SK-N-SH (cell line): ENCODE measurements at regions of chr5 and their contacts with region 1.

Region 1: DNA sequence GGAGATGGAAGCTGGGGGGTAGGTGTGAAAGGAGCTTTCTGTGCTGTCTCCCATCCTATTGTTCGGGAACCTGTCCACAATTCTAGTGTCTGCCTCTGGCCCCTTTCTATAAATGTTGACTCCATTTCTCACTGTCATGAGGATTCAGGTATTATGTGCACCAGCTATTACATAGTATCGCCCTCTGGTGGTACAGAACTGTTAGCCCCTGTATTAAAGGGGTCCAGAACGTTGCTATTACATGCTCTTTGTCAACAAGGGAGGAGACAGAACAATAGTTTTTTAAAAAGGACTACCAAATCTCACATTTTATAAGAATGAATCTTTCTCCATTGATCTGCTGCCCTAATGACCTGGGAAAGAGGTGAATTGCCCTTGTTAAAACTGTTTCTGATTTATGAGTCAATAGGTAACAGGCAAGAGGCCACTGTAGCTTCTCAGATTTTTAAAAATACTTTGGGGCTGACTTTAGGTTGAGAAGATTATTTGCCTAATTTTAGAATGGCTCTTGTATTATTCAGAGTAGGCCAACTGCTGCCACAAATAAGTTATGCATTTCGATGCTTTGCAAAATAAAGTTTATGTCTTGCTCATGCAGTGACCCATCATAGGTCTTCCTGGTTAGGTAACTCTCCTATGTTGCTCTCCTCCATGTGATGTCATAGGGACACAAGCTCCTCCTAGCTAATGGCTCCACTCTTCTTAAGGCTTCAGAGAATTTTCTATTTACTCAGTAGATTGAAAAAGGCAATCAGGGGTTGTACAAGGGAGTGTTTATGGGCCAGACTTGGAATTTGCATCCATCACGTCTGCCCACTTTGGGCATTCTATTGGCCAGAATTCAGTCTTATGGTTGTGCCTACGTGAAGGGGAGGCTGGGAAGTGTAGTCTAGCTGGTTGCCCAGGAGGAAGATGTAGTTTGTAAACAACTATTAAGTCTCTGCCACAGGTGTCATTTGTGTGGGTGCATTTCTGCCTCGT is 20.8 kb downstream of the DCANP1 start:
- DNase-seq: peak; percentile 69
- H3K4me3 ChIP-seq: no peak overlapping the region; a peak in 1 of 4 replicates
- H3K27ac ChIP-seq: no peak overlapping the region
- H3K4me1 ChIP-seq: no peaks in the 10 kb centered on the region
- H3K27me3 ChIP-seq: no peaks in the 10 kb centered on the region
- CTCF ChIP-seq: peak; percentile 79
- EP300 ChIP-seq: no peak
- RAD21 ChIP-seq: peak; percentile 73

Region 2: GRCh38 chr5:135341016-135341666 is 85.3 kb before region 1 on chr5:
- CTCF ChIA-PET with region 1: interaction called, 16 read pairs
- POLR2A ChIA-PET with region 1: no interaction called
- DNase-seq: peak; percentile 68
- H3K4me3 ChIP-seq: no peak overlapping the region
- H3K27ac ChIP-seq: peak overlapping the region in 1 of 2 experiments; percentile 81; a peak in 2 of 4 replicates
- H3K4me1 ChIP-seq: peaks cover 7 to 52% of the 10 kb centered on the region in 2 experiments
- H3K27me3 ChIP-seq: no peaks in the 10 kb centered on the region
- CTCF ChIP-seq: no peak
- EP300 ChIP-seq: 0 out of 4 replicates have a peak, but pooled peaks of 1 of the 2 experiments have one; percentile 49
- RAD21 ChIP-seq: no peak

Region 3: DNA sequence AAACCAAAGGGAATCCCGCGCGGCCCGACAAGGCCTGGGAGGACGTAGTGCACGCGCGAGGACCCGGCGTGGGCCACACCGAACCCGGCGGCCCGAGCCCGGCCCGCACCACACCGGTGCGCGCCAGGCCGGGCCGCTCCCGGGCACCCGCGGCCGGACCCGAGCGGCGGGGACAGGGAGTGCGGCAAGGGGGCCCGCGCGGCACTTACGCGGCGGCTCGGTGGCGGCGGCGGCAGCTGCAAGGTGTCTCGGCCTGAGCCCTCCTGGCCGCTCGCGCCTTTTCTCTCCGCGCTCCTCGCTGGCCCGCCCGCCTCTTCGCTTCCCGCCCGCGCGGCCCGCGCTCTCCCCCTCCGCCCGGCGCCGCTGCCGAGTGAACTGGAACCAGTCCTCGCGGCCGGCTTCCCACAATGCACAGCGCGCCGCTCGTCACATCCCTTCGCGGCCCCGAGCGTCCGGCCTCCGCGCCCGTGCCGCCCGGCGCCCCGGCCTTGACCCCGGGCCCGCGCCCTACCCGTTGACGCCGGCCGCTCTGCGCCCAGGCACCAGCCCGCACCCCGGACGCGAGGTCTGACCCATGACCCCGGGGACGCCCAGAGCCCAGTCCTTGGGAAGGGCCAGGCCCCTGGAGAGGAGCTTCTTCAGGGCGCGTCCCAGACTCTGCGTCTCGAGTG is 27.4 kb before region 1 on chr5 and contains the start of gene MACROH2A1:
- CTCF ChIA-PET with region 1: interaction called, 10 read pairs
- POLR2A ChIA-PET with region 1: interaction called, 5 read pairs
- DNase-seq: peak; percentile 95
- H3K4me3 ChIP-seq: peak within 1 kb of the TSS; percentile 90 to 95
- H3K27ac ChIP-seq: peak within 1 kb of the TSS; percentile 81 to 93
- H3K4me1 ChIP-seq: peaks cover 0 to 29% of the 10 kb centered on the region in 2 experiments; a peak in 3 of 4 replicates
- H3K27me3 ChIP-seq: no peaks in the 10 kb centered on the region
- CTCF ChIP-seq: no peak
- EP300 ChIP-seq: no peak
- RAD21 ChIP-seq: no peak
- polyA plus RNA-seq, gene MACROH2A1: 146 and 165 TPM in 2 replicates

Region 4: DNA sequence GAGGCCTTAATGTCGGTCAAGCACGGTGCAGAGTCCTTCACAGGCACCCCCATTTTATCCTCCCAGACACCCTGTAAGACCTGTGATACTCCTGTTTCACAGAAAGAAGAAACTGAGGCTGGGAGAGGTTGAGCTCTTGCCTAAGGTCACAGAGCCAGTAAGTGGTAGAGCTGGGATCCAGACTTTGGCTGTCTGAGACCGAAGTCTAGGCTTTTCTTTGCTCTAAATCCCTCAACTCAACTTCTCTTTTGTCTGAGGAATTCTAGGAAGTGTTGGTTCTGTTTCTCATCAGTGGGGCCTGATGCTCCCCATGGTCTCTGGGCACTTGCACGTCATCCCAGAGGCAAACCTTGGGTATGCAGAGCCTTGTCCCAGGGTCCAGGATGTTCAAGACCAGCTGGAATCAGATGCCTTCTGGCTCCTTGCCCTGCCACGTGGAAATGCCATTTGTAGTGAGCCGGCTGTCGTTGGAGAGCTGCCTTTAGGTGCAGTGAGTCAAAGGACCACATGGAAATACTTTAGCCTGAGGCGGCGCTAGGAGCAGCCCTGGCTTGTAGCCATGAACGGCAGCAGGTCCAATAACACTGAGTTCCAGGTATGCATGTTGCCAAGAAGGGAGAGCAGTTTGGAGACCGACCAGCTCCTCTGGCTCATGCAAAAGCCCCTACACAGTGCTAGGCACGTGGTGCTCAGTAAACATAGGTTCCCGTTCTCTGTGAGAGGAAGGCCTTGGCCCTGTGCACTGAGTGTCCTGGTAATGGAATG is 11.6 kb after region 1 on chr5:
- CTCF ChIA-PET with region 1: interaction called, 56 read pairs
- POLR2A ChIA-PET with region 1: no interaction called
- DNase-seq: no peak
- H3K4me3 ChIP-seq: no peak overlapping the region
- H3K27ac ChIP-seq: peak overlapping the region; percentile 11 to 55; a peak in 1 of 4 replicates
- H3K4me1 ChIP-seq: peaks cover 0 to 42% of the 10 kb centered on the region in 2 experiments; a peak in 1 of 4 replicates
- H3K27me3 ChIP-seq: no peaks in the 10 kb centered on the region
- CTCF ChIP-seq: no peak
- EP300 ChIP-seq: peak in 1 of 2 experiments; percentile 38; a peak in 1 of 4 replicates
- RAD21 ChIP-seq: no peak